ENCODE measurements at regions of chr6 and their contacts with region 1.

Region 1: GRCh38 chr6:27893059-27893835 is 18.9 kb downstream of the OR2B2 start:
- DNase-seq: peak; percentile 97
- H3K4me3 ChIP-seq: peak overlapping the region; percentile 66 to 84 (median 74)
- H3K27ac ChIP-seq: peak overlapping the region; percentile 86
- H3K4me1 ChIP-seq: peaks cover 11% of the 10 kb centered on the region
- H3K27me3 ChIP-seq: no peaks in the 10 kb centered on the region
- CTCF ChIP-seq: no peak

Region 2: GRCh38 chr6:27157459-27158315 is 735.6 kb before region 1 on chr6:
- CTCF ChIA-PET with region 1: no interaction called
- dilution Hi-C with region 1: no loop called
- in situ Hi-C with region 1: loop called in 1 of 2 experiments (anchors 25 kb)
- intact Hi-C with region 1: loop called (anchors 1 kb)
- DNase-seq: peak; percentile 86
- H3K4me3 ChIP-seq: peak overlapping the region; percentile 48 to 82 (median 60)
- H3K27ac ChIP-seq: no peak overlapping the region
- H3K4me1 ChIP-seq: peaks cover 6% of the 10 kb centered on the region
- H3K27me3 ChIP-seq: no peaks in the 10 kb centered on the region
- CTCF ChIP-seq: peak; percentile 16 to 55

Region 3: DNA sequence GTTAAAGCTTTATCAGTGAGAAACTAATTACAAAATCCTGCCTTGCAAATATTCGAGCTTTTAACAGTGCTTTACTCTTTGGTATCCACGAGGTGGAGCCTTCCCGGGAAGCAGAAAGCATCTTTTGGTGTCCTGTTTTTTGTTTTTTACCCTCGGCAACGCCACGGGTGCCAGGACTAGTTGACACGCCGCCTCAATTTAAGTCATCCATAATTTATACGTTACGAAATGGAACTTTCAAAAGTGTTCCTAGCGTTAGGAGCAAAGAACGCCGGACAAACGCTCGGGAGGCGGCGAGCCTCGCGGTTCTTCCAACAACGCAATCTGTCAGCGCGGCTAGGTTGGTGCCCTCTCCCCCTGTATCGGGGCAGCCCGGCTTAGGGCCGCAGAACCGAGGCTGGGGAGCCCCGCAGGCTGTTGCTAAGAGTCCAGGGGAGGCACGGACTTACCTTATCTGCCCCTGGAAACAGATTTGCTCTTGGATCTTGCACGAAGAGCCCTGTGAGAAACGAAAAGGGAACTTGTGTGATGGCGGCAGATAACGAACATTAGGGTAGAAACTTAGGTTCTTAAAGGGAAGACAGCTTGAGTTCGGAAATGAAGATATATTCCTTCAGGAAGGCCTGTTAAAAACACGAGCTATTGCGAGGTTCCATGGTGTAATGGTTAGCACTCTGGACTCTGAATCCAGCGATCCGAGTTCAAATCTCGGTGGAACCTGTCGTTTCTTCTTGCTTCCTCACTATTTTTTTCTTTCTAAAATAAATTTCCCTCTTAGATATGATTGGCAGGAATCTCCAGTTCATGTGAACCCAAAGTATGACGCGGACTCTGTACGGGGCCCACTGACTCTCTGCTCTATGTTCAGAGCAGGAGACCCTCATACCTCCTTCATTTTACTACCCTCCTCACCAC is 374.1 kb before region 1 on chr6:
- CTCF ChIA-PET with region 1: no interaction called
- dilution Hi-C with region 1: no loop called
- in situ Hi-C with region 1: no loop called
- intact Hi-C with region 1: loop called (anchors 1 kb)
- DNase-seq: peak; percentile 86
- H3K4me3 ChIP-seq: peak overlapping the region; percentile 45 to 67 (median 55)
- H3K27ac ChIP-seq: peak overlapping the region; percentile 52
- H3K4me1 ChIP-seq: peaks cover 15% of the 10 kb centered on the region
- H3K27me3 ChIP-seq: peaks cover 3% of the 10 kb centered on the region
- CTCF ChIP-seq: peak; percentile 76 to 77

Region 4: DNA sequence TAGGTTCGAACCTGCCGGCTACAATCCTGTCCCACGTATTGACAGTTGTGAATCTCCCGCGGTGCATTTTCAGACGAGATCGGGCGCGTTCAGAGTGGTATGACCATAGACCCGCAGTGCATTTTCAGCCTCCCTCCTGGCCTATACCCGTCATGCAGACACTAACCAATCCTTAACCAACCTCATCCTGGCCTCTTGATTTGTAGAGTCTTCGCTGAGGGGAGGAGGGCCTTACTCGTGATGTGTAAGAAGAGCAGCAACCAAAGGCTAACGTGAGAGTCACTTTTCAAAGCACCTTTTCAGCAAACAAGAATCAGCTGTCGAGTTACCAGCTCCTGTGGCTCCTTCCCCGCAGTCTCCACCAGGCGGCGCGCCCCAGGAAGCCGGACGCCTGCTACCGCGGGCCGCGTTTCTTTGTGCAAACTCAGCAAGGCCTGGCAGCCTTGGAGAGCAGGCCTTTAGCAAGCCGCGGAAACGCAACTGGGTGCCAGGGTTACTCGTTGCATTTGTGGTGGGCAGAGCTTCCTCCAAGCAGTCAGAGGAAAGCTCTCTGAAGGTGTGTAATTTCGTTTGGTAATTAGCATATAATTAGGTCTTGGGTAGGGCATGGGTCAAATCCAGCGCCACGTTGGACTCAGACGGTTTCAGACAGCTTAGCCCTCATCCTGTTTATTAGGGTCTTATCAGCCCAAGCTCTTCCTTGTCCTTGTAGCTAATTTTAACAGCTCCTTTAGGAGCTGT is 120.8 kb before region 1 on chr6:
- CTCF ChIA-PET with region 1: interaction called, 5 read pairs
- dilution Hi-C with region 1: no loop called
- in situ Hi-C with region 1: no loop called
- intact Hi-C with region 1: loop called (anchors 1 kb)
- DNase-seq: peak; percentile 90
- H3K4me3 ChIP-seq: peak overlapping the region in 2 of 3 experiments; percentile 12 to 19
- H3K27ac ChIP-seq: no peak overlapping the region
- H3K4me1 ChIP-seq: peaks cover 6% of the 10 kb centered on the region
- H3K27me3 ChIP-seq: no peaks in the 10 kb centered on the region
- CTCF ChIP-seq: peak; percentile 91 to 95

Region 5: DNA sequence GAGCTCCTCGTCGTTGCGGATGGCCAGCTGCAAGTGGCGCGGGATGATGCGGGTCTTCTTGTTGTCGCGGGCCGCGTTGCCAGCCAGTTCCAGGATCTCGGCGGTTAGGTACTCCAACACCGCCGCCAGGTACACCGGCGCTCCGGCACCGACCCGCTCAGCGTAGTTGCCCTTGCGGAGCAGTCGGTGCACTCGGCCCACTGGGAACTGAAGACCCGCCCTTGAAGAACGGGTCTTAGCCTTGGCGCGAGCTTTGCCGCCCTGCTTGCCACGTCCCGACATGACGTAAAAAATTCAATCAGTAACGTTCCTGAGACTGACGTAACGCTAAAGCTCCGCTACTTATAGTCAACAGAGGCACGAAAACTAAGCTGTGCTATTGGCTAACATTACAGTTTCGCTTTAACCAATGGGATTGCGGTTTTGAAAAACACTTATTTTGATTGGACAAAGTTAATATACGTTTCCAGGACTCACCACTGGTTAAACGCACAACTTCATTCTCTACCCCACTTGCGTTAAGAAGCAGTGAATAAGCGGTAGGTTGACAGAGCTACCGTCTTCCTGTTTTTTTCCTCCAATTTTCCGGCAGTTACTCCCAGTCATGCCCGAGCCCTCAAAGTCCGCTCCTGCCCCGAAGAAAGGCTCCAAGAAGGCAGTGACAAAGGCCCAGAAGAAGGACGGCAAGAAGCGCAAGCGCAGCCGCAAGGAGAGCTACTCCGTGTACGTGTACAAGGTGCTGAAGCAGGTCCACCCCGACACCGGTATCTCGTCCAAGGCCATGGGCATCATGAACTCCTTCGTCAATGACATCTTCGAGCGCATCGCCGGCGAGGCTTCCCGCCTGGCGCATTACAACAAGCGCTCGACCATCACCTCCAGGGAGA is 54.9 kb before region 1 on chr6:
- CTCF ChIA-PET with region 1: interaction called, 6 read pairs
- dilution Hi-C with region 1: no loop called
- in situ Hi-C with region 1: no loop called
- intact Hi-C with region 1: loop called (anchors 1 kb)
- DNase-seq: peak; percentile 97
- H3K4me3 ChIP-seq: peak overlapping the region; percentile 84 to 92 (median 92)
- H3K27ac ChIP-seq: peak overlapping the region; percentile 98
- H3K4me1 ChIP-seq: peaks cover 7% of the 10 kb centered on the region
- H3K27me3 ChIP-seq: no peaks in the 10 kb centered on the region
- CTCF ChIP-seq: no peak